Posterior vena cava (tissue), 2 donors: ENCODE measurements at regions of chr6 and their contacts with region 1.

Region 1: DNA sequence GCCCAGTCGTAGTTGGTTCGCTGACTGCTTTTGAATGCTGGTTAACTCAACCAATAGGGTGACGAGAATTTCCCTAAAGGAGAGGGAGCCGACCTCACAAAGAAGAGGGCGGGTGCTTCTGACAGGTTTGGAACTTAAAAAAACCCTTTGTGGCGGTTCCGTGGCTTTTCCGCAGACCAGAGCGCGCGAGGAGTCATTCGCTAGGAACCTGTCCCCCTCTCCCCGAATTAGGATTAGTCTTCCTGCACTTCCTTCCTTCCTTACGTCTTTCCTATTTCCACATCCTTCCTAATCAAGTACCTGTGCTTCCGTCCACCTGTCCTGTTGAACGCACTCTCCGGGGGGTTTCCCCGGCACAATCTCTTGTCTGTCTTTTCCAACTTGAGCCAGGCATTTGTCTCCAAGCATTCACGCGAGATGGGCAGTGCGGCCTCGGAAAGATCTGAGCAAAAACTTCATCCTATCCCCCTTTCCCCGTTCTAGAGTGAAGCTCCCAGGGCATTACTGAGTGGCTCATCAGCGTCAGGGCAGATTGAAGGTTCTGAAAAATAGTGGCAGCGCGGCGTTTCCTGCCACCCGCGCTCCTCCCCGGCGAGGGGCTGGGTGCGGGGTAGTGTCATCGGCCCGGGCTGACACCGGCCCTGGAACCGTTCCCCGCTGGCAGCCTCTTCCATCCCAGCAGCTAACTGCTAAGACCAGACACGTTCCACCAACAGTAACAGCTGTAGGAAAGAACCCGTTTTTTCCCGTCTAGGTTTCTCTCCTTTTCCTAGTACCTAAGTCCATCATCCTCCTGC is 1.5 kb upstream of the STXBP5 start:
- DNase-seq: peak; percentile 91

Region 2: GRCh38 chr6:146613947-146614346 is 588.8 kb before region 1 on chr6:
- intact Hi-C with region 1: loop called in 1 of 2 experiments (anchors 5 kb)
- DNase-seq: no peak